Posterior vena cava (tissue), 2 donors: ENCODE measurements at regions of chr4 and their contacts with region 1.

Region 1: GRCh38 chr4:124105212-124105611 is 607.3 kb downstream of the ANKRD50 start:
- DNase-seq: no peak

Region 2: GRCh38 chr4:123776254-123776653 is 329.0 kb before region 1 on chr4:
- intact Hi-C with region 1: loop called in 1 of 2 experiments (anchors 10 kb)
- DNase-seq: no peak

Region 3: DNA sequence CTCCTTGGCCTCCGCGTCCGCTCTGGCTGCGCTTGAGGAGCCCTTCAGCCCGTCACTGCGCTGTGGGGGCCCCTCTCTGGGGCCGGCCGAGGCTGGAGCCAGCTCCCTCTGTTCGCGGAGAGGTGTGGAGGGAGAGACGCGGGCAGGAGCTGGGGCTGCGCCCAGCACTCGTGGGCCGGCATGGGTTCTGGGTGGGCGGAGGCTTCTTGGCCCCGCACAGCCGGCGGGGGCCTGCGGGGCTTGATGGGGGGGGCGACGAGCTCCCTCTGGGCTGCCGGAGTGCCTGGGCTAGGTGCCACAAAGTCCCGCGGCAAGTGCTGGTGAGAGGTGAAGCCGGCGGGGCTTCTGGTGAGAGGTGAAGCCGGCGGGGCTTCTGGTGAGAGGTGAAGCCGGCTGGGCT is 545.4 kb after region 1 on chr4:
- intact Hi-C with region 1: no loop called
- DNase-seq: no peak